Transverse colon (tissue), 4 donors: ENCODE measurements at regions of chr19 and their contacts with region 1.

Region 1: GRCh38 chr19:29844891-29845572 is 33.2 kb downstream of the CCNE1 start:
- DNase-seq: peak; percentile 97
- H3K4me3 ChIP-seq: peak overlapping the region; percentile 58 to 80 (median 68)
- H3K27ac ChIP-seq: peak overlapping the region; percentile 84 to 95 (median 90)
- H3K4me1 ChIP-seq: peaks cover 14 to 22% (median 18%) of the 10 kb centered on the region in 4 donors
- H3K27me3 ChIP-seq: peaks cover 2% of the 10 kb centered on the region
- CTCF ChIP-seq: peak in 1 of 5 experiments; percentile 20
- EP300 ChIP-seq: no peak
- POLR2A ChIP-seq: peak; percentile 73

Region 2: DNA sequence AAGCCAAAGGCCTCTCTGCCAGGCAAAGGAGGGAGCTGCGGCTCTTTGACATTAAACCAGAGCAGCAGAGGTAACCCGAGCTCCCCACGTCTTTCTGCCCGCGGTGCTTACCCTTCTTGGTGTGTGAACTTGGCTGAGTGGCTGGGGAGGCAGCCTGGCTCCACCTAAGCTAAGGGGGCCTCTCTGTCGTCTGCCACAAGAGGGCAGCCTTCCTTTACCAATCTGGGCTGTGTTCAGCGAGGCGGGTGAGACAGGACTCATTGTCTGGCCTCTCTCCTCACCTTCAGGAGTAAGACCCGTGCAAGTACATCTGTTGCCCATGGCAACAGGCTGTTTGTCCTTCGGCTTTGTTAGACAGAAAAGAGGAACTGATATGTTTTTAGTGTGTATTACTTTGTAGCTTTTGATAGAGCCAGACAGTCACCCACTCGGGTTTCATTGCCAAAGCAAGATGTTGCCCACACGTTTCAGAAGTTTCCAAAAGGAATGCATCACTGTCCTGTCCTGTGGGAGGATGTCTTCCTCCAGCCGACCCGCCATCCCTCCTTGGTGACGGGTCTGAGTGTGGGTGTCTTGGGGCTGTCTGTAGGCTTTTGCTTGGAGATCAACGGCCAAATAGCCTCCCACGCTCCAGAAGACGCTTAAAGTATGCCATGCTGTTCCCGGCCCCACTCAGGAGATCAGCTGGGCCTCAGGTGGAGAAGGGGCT is 234.3 kb before region 1 on chr19:
- in situ Hi-C with region 1: loop called in 1 of 4 experiments (anchors 25 kb)
- intact Hi-C with region 1: no loop called
- DNase-seq: peak; percentile 80
- H3K4me3 ChIP-seq: no peak overlapping the region
- H3K27ac ChIP-seq: no peak overlapping the region
- H3K4me1 ChIP-seq: peaks cover 4 to 10% (median 7%) of the 10 kb centered on the region in 4 donors
- H3K27me3 ChIP-seq: no peaks in the 10 kb centered on the region
- CTCF ChIP-seq: peak; percentile 70 to 88 (median 78)
- EP300 ChIP-seq: no peak
- POLR2A ChIP-seq: no peak